B cell (primary cell): ENCODE measurements at regions of chr3 and their contacts with region 1.

Region 1: GRCh38 chr3:141426404-141427034 is 58.2 kb downstream of the ZBTB38 start:
- DNase-seq: no peak
- ATAC-seq: no peak
- H3K4me3 ChIP-seq: no peak overlapping the region
- H3K4me3 Mint-ChIP-seq: no peak overlapping the region
- H3K27ac ChIP-seq: no peak overlapping the region
- H3K27ac Mint-ChIP-seq: no peak overlapping the region
- H3K4me1 ChIP-seq: no peaks in the 10 kb centered on the region
- H3K4me1 Mint-ChIP-seq: peaks cover 3% of the 10 kb centered on the region
- H3K27me3 ChIP-seq: no peaks in the 10 kb centered on the region
- H3K27me3 Mint-ChIP-seq: no peaks in the 10 kb centered on the region
- CTCF ChIP-seq: no peak

Region 2: GRCh38 chr3:139830817-139831216 is 1595.7 kb before region 1 on chr3:
- CTCF ChIA-PET with region 1: no interaction called
- POLR2A ChIA-PET with region 1: no interaction called
- intact Hi-C with region 1: no loop called
- DNase-seq: no peak
- ATAC-seq: no peak
- H3K4me3 ChIP-seq: no peak overlapping the region
- H3K4me3 Mint-ChIP-seq: no peak overlapping the region
- H3K27ac ChIP-seq: no peak overlapping the region
- H3K27ac Mint-ChIP-seq: no peak overlapping the region
- H3K4me1 ChIP-seq: no peaks in the 10 kb centered on the region
- H3K4me1 Mint-ChIP-seq: no peaks in the 10 kb centered on the region
- H3K27me3 ChIP-seq: no peaks in the 10 kb centered on the region
- H3K27me3 Mint-ChIP-seq: no peaks in the 10 kb centered on the region
- CTCF ChIP-seq: no peak

Region 3: DNA sequence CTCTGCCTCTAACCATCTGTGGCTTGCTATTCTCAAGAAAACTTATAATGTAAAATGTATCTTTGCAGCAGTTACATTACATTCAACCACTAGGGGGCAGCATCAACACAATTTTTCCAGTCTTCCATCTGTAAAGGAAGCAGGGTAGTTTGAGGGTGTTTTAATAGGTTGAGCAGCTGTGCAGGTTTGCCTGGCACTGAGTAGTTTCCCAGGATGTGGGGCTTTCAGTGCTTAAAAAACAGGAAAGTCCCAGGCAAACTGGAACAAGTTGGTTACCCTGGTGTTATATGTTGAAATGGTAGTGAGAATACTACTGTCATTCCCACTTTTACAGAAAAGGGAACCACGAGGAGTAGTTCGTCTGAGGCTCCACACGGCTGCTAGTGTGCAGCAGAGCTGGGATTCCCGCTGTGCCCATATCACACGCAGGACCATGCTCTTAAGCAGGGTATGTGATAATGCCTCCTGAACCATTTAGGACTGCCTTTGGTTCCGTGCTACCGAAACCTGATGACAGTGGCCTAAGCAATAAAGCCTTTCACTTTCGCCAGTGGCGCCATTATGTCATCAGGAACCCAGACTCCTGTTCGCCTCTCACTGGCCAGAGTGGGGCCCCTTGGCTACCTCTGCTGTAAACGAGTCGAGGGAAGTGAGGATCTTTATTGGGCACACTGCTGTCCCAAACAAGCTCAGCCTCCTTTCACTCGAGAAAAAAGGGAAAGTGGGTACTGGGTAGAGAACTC is 122.9 kb before region 1 on chr3:
- CTCF ChIA-PET with region 1: interaction called, 10 read pairs
- POLR2A ChIA-PET with region 1: no interaction called
- intact Hi-C with region 1: no loop called
- DNase-seq: peak; percentile 83
- ATAC-seq: peak; percentile 78
- H3K4me3 ChIP-seq: no peak overlapping the region
- H3K4me3 Mint-ChIP-seq: no peak overlapping the region
- H3K27ac ChIP-seq: no peak overlapping the region
- H3K27ac Mint-ChIP-seq: no peak overlapping the region
- H3K4me1 ChIP-seq: peaks cover 0 to 5% of the 10 kb centered on the region in 2 donors
- H3K4me1 Mint-ChIP-seq: no peaks in the 10 kb centered on the region
- H3K27me3 ChIP-seq: no peaks in the 10 kb centered on the region
- H3K27me3 Mint-ChIP-seq: no peaks in the 10 kb centered on the region
- CTCF ChIP-seq: peak; percentile 84

Region 4: DNA sequence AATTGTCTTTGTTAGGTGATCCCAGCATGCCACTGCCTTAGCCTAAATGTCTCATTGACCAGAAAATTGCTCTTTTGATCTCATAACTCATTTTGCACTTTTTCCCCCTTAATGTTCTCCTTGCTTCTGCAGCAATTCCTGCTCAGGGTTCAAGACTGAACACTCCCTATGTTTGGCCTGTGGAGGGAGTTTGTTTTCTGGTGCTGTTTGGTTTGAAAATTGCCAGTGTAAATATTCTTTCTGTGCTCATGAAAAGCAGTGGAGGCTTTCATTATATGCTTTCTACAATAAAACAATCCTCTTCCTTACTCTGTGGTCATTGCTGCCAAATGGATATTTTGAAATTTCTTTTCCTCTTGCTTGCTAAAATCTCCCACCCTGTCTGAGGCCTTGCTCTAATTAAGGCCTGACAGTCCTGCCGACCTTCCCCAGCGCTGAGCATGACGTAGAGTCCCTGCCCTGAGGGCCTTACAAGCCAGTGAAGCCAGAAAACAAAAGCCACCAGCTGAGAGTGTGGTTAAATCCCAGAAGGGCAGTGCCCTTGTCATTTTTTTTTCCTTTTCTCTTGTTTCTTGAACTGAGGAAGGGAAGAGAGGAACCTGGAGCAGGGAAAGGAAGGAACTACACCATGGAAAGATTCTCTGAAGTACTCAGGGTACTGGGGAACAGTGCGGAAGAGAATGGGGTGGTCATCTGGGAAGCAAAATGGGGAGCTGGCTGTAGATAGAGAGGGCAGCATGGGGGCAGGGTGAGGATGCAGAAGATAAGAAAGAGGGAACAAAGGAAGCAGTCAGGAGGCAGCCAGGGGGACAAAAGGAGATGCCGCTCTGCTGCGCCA is 33.4 kb before region 1 on chr3:
- CTCF ChIA-PET with region 1: no interaction called
- POLR2A ChIA-PET with region 1: no interaction called
- intact Hi-C with region 1: no loop called
- DNase-seq: no peak
- ATAC-seq: no peak
- H3K4me3 ChIP-seq: no peak overlapping the region
- H3K4me3 Mint-ChIP-seq: no peak overlapping the region
- H3K27ac ChIP-seq: no peak overlapping the region
- H3K27ac Mint-ChIP-seq: no peak overlapping the region
- H3K4me1 ChIP-seq: no peaks in the 10 kb centered on the region
- H3K4me1 Mint-ChIP-seq: peaks cover 16% of the 10 kb centered on the region
- H3K27me3 ChIP-seq: peaks cover 0 to 3% (median 0%) of the 10 kb centered on the region in 4 experiments
- H3K27me3 Mint-ChIP-seq: no peaks in the 10 kb centered on the region
- CTCF ChIP-seq: no peak